ENCODE measurements at regions of chrX and their contacts with region 1.

Region 1: DNA sequence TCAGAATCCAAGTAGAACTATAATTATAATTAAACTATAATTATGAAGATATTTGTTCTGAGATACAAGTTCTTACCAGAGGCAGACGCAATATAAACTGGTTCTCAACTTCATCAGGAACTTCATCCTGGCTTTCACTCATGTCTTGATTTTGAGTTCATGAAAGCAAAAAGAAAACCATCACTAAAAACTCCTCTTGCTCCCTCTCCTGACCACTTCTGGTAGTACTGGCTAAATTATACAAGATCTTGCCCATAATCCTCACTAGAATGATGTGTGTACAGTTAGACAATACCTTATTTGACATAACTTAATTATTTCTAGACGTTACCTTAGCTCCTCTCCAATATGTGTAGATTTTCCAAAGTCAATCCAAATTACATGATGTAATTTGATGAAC is 3.7 kb downstream of the TAF7L start:
- DNase-seq: peak in 1 of 2 experiments; percentile 24
- H3K4me3 ChIP-seq: no peak overlapping the region
- H3K4me3 Mint-ChIP-seq: no peak overlapping the region
- H3K27ac Mint-ChIP-seq: no peak overlapping the region
- H3K4me1 ChIP-seq: no peaks in the 10 kb centered on the region
- H3K4me1 Mint-ChIP-seq: no peaks in the 10 kb centered on the region
- H3K27me3 ChIP-seq: no peaks in the 10 kb centered on the region
- H3K27me3 Mint-ChIP-seq: no peaks in the 10 kb centered on the region
- CTCF ChIP-seq: peak; percentile 17 to 43

Region 2: GRCh38 chrX:100895365-100896075 is 391.9 kb before region 1 on chrX:
- CTCF ChIA-PET with region 1: no interaction called
- POLR2A ChIA-PET with region 1: no interaction called
- intact Hi-C with region 1: loop called (anchors 5 kb)
- DNase-seq: peak; percentile 53
- H3K4me3 ChIP-seq: no peak overlapping the region
- H3K4me3 Mint-ChIP-seq: no peak overlapping the region
- H3K27ac Mint-ChIP-seq: no peak overlapping the region
- H3K4me1 ChIP-seq: peaks cover 7% of the 10 kb centered on the region; the same call in 1 of the 2 replicates
- H3K4me1 Mint-ChIP-seq: peaks cover 13% of the 10 kb centered on the region
- H3K27me3 ChIP-seq: no peaks in the 10 kb centered on the region
- H3K27me3 Mint-ChIP-seq: no peaks in the 10 kb centered on the region
- CTCF ChIP-seq: peak; percentile 36 to 66

Region 3: DNA sequence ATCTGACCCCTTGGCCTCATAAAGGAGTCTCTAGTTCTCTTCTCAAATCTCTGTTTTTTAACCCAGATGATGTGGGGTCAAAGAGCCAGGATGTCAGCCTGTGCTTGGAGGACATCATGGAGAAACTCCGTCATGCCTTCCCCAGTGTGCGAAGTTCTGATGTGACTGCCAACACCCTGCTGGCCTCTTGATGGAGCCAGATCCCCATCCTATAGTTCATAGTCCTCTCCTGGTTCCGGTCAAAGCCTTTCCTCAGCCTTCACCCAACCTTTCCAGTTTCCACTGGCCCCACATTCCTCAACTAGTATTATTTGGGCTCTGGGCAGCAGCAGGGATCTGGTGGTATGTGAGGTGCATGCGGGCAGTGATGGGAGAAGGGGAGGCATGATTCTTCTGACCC is 27.0 kb before region 1 on chrX:
- CTCF ChIA-PET with region 1: no interaction called
- POLR2A ChIA-PET with region 1: no interaction called
- intact Hi-C with region 1: loop called (anchors 1 kb)
- DNase-seq: peak; percentile 34 to 35
- H3K4me3 ChIP-seq: no peak overlapping the region
- H3K4me3 Mint-ChIP-seq: no peak overlapping the region
- H3K27ac Mint-ChIP-seq: no peak overlapping the region
- H3K4me1 ChIP-seq: no peaks in the 10 kb centered on the region
- H3K4me1 Mint-ChIP-seq: no peaks in the 10 kb centered on the region
- H3K27me3 ChIP-seq: no peaks in the 10 kb centered on the region
- H3K27me3 Mint-ChIP-seq: no peaks in the 10 kb centered on the region
- CTCF ChIP-seq: peak in 1 of 2 experiments; percentile 55

Measured in Caco-2 (cell line).